CD8-positive, alpha-beta memory T cell (primary cell): ENCODE measurements at regions of chr9 and their contacts with region 1.

Region 1: DNA sequence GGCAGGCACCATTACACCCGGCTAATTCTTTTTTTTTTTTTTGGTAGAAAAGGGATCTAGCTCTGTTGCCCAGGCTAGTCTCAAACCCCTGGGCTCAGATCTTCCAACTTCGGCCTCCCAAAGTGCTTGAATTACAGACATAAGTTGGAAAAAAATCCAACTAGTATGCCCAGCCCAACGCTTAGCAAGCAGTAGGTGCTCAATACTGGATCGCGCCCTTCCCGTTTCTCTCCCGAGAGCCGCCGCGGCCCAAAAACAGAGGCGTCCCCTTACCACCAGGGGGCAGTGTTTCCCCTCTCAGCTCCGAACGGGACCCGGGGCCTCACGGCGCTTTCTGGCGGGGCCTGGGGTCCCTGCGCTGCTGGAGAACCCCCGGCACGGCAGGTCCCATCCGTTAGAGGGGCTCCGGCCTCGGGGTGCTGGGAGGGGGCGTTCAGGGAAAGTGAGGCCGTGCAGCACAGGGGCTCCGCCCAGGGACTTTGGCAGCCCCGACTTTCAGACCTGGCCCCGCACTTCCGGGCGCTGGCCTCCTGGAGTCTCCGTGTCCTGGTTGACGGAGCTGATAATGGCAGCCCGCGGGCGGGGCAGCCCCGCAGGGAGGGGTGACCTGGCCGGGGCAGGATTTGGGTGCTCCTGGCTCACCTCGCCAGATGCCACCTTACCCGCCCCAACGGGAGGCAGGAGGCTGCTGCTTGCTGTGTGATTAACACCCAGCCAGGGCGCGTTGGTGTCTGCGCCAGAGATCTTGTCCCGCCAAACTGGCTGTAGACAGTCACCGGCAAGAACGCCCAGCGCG is 15.2 kb downstream of the PTGES start:
- DNase-seq: peak; percentile 77 to 87 (median 84)
- H3K4me3 ChIP-seq: peak overlapping the region; percentile 81
- H3K4me3 Mint-ChIP-seq: peak overlapping the region; percentile 71 to 90 (median 76)
- H3K27ac ChIP-seq: peak overlapping the region; percentile 82
- H3K27ac Mint-ChIP-seq: peak overlapping the region; percentile 42 to 93 (median 74)
- H3K4me1 ChIP-seq: peaks cover 13% of the 10 kb centered on the region
- H3K4me1 Mint-ChIP-seq: peaks cover 6 to 13% (median 9%) of the 10 kb centered on the region in 3 donors
- H3K27me3 ChIP-seq: no peaks in the 10 kb centered on the region
- H3K27me3 Mint-ChIP-seq: peaks cover 0 to 7% of the 10 kb centered on the region in 2 donors

Region 2: GRCh38 chr9:129783516-129784361 is 46.1 kb after region 1 on chr9:
- CTCF ChIA-PET with region 1: interaction called, 59 read pairs
- POLR2A ChIA-PET with region 1: no interaction called
- DNase-seq: peak; percentile 40 to 79 (median 63)
- H3K4me3 ChIP-seq: no peak overlapping the region
- H3K4me3 Mint-ChIP-seq: no peak overlapping the region
- H3K27ac ChIP-seq: no peak overlapping the region
- H3K27ac Mint-ChIP-seq: peak overlapping the region in 1 of 8 donors; percentile 1
- H3K4me1 ChIP-seq: no peaks in the 10 kb centered on the region
- H3K4me1 Mint-ChIP-seq: peaks cover 0 to 5% (median 3%) of the 10 kb centered on the region in 3 donors
- H3K27me3 ChIP-seq: no peaks in the 10 kb centered on the region
- H3K27me3 Mint-ChIP-seq: peaks cover 11 to 14% of the 10 kb centered on the region in 2 donors